ENCODE measurements at regions of chr9 and their contacts with region 1.

Region 1: GRCh38 chr9:114930056-114930812 is at the start of gene TNFSF8:
- DNase-seq: peak; percentile 90
- ATAC-seq: peak; percentile 68
- H3K4me3 Mint-ChIP-seq: peak within 1 kb of the TSS; percentile 99
- H3K27ac Mint-ChIP-seq: peak within 1 kb of the TSS; percentile 99
- H3K4me1 Mint-ChIP-seq: peaks cover 54% of the 10 kb centered on the region
- H3K27me3 Mint-ChIP-seq: no peaks in the 10 kb centered on the region
- total RNA-seq, gene TNFSF8: 52.6 to 55.3 TPM

Region 2: GRCh38 chr9:114691046-114691955 is 238.9 kb before region 1 on chr9:
- CTCF ChIA-PET with region 1: interaction called, 6 read pairs
- POLR2A ChIA-PET with region 1: interaction called, 42 read pairs
- DNase-seq: peak; percentile 91
- ATAC-seq: peak; percentile 93
- H3K4me3 Mint-ChIP-seq: peak overlapping the region; percentile 54
- H3K27ac Mint-ChIP-seq: peak overlapping the region; percentile 93
- H3K4me1 Mint-ChIP-seq: peaks cover 95% of the 10 kb centered on the region
- H3K27me3 Mint-ChIP-seq: no peaks in the 10 kb centered on the region

Region 3: GRCh38 chr9:114718801-114719221 is 211.4 kb before region 1 on chr9:
- CTCF ChIA-PET with region 1: no interaction called
- POLR2A ChIA-PET with region 1: interaction called, 20 read pairs
- DNase-seq: peak; percentile 98
- ATAC-seq: peak; percentile 95
- H3K4me3 Mint-ChIP-seq: peak overlapping the region; percentile 19
- H3K27ac Mint-ChIP-seq: peak overlapping the region; percentile 94
- H3K4me1 Mint-ChIP-seq: peaks cover 88% of the 10 kb centered on the region
- H3K27me3 Mint-ChIP-seq: no peaks in the 10 kb centered on the region

Region 4: GRCh38 chr9:114880291-114880751 is 49.9 kb before region 1 on chr9:
- CTCF ChIA-PET with region 1: no interaction called
- POLR2A ChIA-PET with region 1: no interaction called
- DNase-seq: no peak
- ATAC-seq: no peak
- H3K4me3 Mint-ChIP-seq: no peak overlapping the region
- H3K27ac Mint-ChIP-seq: no peak overlapping the region
- H3K4me1 Mint-ChIP-seq: peaks cover 5% of the 10 kb centered on the region
- H3K27me3 Mint-ChIP-seq: no peaks in the 10 kb centered on the region

Region 5: GRCh38 chr9:114906908-114907571 is 23.2 kb before region 1 on chr9:
- CTCF ChIA-PET with region 1: interaction called, 114 read pairs
- POLR2A ChIA-PET with region 1: interaction called, 90 read pairs
- DNase-seq: peak; percentile 57
- ATAC-seq: peak; percentile 11
- H3K4me3 Mint-ChIP-seq: peak overlapping the region; percentile 62
- H3K27ac Mint-ChIP-seq: peak overlapping the region; percentile 90
- H3K4me1 Mint-ChIP-seq: peaks cover 56% of the 10 kb centered on the region
- H3K27me3 Mint-ChIP-seq: no peaks in the 10 kb centered on the region

Region 6: GRCh38 chr9:114919611-114920010 is 10.6 kb before region 1 on chr9:
- CTCF ChIA-PET with region 1: interaction called, 19 read pairs
- POLR2A ChIA-PET with region 1: interaction called, 11 read pairs
- DNase-seq: no peak
- ATAC-seq: no peak
- H3K4me3 Mint-ChIP-seq: no peak overlapping the region
- H3K27ac Mint-ChIP-seq: peak overlapping the region; percentile 35
- H3K4me1 Mint-ChIP-seq: peaks cover 86% of the 10 kb centered on the region
- H3K27me3 Mint-ChIP-seq: no peaks in the 10 kb centered on the region

Region 7: GRCh38 chr9:114960276-114960675 is 30.0 kb after region 1 on chr9:
- CTCF ChIA-PET with region 1: interaction called, 7 read pairs
- POLR2A ChIA-PET with region 1: interaction called, 10 read pairs
- DNase-seq: no peak
- ATAC-seq: no peak
- H3K4me3 Mint-ChIP-seq: no peak overlapping the region
- H3K27ac Mint-ChIP-seq: no peak overlapping the region
- H3K4me1 Mint-ChIP-seq: peaks cover 50% of the 10 kb centered on the region
- H3K27me3 Mint-ChIP-seq: no peaks in the 10 kb centered on the region

Region 8: GRCh38 chr9:115008536-115009270 is 78.5 kb after region 1 on chr9:
- CTCF ChIA-PET with region 1: interaction called, 4 read pairs
- POLR2A ChIA-PET with region 1: interaction called, 10 read pairs
- DNase-seq: peak; percentile 34
- ATAC-seq: peak; percentile 49
- H3K4me3 Mint-ChIP-seq: no peak overlapping the region
- H3K27ac Mint-ChIP-seq: no peak overlapping the region
- H3K4me1 Mint-ChIP-seq: peaks cover 61% of the 10 kb centered on the region
- H3K27me3 Mint-ChIP-seq: no peaks in the 10 kb centered on the region

Region 9: DNA sequence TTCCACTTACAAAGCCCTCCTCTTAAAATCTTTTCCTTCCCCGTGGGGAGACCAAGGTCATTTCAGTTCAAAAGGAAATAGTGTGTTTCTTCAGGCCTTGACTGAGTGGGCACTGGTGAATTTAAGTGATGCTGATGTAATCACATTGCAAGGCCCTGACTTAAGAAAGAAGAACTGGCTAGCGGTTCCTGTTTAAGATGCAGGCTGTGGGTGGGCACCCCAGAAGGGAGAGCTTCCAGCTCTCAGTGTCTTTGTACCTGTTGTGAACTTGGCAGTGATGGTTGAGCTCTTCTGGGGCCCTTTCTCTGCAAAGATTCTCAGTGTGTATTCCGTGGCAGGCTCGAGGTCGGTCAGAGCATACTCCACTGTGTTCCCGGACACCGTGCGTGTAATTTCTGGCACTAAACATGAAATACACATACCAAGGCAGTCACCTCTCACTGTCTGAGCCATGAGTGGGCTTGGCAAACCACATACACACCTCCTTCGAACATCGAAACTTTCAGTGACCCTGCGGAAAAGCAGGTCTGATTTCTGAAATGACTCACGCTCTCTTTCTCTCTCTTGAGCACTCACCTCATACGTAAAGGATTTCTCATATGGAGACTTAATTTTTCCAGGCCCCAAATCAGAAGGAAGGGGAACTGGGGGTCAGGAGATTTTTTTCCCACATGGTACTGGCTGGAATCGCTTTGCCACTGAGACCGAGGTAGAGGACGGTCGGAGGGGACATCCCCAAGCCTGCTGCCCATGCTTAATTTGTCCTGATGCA is 105.8 kb after region 1 on chr9:
- CTCF ChIA-PET with region 1: no interaction called
- POLR2A ChIA-PET with region 1: no interaction called
- DNase-seq: peak; percentile 46
- ATAC-seq: peak; percentile 84
- H3K4me3 Mint-ChIP-seq: peak overlapping the region; percentile 40
- H3K27ac Mint-ChIP-seq: peak overlapping the region; percentile 79
- H3K4me1 Mint-ChIP-seq: peaks cover 25% of the 10 kb centered on the region
- H3K27me3 Mint-ChIP-seq: peaks cover 4% of the 10 kb centered on the region

Region 10: GRCh38 chr9:115192835-115193525 is 262.7 kb after region 1 on chr9:
- CTCF ChIA-PET with region 1: no interaction called
- POLR2A ChIA-PET with region 1: no interaction called
- DNase-seq: no peak
- ATAC-seq: no peak
- H3K4me3 Mint-ChIP-seq: no peak overlapping the region
- H3K27ac Mint-ChIP-seq: no peak overlapping the region
- H3K4me1 Mint-ChIP-seq: peaks cover 2% of the 10 kb centered on the region
- H3K27me3 Mint-ChIP-seq: peaks cover 23% of the 10 kb centered on the region

Measured in activated CD8-positive, alpha-beta T cell treated with anti-CD3 and anti-CD28 coated beads, Interleukin-2, amount 10 ng/mL, durations not matched to agents 7 days and 5 days (primary cell).